Activated T-helper 1 cell treated with anti-CD3 and anti-CD28 coated beads, Interleukin-12 subunit alpha, Interleukin-12 subunit beta, Interleukin-2, Interleukin-4 antibody, amounts not matched to agents 30 ng/mL and 10 ng/mL and 1 ng/mL, durations not matched to agents 14 hours and 24 hours and 36 hours (primary cell): ENCODE measurements at regions of chr2 and their contacts with region 1.

Region 1: DNA sequence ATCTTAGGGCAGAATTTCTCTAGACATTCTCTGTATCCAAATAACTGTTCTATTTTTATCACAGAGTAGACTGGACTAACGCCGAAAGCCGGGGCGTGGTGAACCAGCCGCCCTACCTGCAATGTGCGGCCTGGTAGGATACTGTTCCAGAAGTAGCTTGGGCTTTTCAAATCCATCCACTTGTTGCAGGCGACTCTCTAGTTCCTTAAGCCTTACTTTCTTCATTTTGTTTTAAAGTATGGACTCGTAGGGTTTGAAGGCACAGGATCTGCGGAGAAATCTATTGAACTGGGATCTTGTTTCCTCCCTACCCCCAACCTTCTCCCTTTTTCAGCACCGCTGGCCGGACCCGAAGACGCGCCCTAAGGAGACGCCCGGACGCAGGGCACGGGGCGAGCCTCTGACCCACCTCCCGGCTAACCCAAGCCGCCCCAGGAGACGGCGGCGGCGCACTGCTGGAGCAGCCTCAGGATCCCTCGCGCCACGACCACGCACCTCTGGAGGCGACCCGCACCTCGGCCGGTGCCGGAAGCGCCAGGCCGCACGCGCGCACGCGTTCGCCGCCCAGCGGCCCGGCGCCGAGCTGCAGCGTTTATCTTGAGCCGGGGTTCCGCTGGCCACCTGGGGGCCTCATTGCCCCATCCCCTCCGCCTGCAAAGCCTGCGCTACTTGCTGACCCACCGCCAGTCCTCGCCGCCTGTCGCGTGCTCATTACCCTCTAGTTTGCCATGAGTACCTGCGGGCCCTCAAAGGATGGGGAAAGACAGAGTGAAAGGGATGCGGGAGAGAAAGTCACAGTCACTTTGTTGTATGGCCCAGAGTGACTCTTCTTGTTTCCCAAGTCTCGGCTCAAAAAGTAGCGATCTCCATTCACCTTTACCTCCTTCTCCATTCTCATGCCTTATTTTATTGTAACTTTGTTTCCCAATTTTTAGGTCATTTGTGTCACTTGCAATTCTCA is at the start of gene METTL5:
- DNase-seq: peak; percentile 79
- H3K4me3 Mint-ChIP-seq: peak within 1 kb of the TSS; percentile 93
- H3K27ac Mint-ChIP-seq: peak within 1 kb of the TSS; percentile 89
- H3K4me1 Mint-ChIP-seq: peaks cover 50% of the 10 kb centered on the region
- H3K27me3 Mint-ChIP-seq: no peaks in the 10 kb centered on the region
- total RNA-seq, gene METTL5: 92.0 and 92.1 TPM in 2 replicates

Region 2: DNA sequence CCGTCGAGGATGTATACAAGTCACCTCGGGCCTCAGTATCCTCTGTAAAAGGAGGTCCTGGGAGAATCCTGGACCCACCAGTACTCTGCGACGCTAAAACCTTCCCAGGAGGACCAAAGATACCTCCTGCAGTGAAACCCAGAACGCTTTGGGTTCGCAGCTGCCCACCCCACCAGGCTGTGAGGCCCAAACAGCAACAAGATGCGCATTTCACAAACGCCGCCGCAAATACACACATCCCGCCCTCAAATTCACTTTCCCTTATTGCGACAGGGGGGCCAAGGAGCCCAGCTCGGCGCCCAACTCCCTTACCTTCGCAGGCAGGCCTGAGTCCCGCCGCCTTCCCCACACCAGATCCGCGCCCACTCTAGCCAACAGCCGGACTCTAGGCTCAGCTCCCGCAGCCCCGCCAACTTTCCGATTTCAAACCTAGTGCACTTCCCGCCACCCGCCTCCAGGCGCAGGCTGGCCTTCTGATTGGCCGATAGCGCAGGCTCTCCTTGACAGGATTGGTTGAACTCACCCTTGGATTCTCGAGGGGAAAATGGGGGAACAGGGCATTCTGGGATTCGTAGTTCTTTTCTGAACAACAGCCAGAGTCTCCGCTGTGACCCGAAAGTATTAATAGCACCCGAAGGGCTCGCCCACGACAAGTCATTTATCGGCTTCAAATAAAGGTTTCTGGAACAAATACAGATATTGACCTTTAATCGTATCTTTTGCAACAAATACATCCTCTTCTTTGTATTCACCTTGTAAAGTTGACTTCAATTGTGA is 934.5 kb before region 1 on chr2 and contains the start of gene SPC25:
- intact Hi-C with region 1: loop called (anchors 10 kb)
- DNase-seq: peak; percentile 87
- H3K4me3 Mint-ChIP-seq: peak within 1 kb of the TSS; percentile 98
- H3K27ac Mint-ChIP-seq: peak within 1 kb of the TSS; percentile 92
- H3K4me1 Mint-ChIP-seq: peaks cover 32% of the 10 kb centered on the region
- H3K27me3 Mint-ChIP-seq: peaks cover 21% of the 10 kb centered on the region
- total RNA-seq, gene SPC25: 17.9 and 19.9 TPM in 2 replicates

Region 3: DNA sequence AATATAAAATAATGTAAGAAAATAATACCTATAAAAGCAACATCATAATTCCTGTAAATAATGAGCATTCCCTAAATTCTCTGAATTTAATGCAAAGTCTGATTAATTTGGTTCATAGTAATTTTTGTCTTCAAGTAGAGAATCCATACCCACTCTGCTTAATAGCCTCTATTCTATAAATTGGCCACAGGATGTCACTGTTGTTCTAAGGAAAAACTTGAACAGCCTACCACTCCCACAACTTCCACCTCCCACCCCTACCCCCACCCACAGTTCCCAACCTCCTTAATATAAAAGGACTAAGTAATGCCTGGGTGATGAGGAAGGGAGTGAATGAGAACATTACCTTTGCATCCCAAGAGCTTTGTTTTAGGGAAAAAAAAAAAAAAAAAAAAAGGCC is 372.6 kb before region 1 on chr2:
- intact Hi-C with region 1: loop called (anchors 2 kb)
- DNase-seq: no peak
- H3K4me3 Mint-ChIP-seq: no peak overlapping the region
- H3K27ac Mint-ChIP-seq: no peak overlapping the region
- H3K4me1 Mint-ChIP-seq: no peaks in the 10 kb centered on the region
- H3K27me3 Mint-ChIP-seq: peaks cover under 1% of the 10 kb centered on the region

Region 4: DNA sequence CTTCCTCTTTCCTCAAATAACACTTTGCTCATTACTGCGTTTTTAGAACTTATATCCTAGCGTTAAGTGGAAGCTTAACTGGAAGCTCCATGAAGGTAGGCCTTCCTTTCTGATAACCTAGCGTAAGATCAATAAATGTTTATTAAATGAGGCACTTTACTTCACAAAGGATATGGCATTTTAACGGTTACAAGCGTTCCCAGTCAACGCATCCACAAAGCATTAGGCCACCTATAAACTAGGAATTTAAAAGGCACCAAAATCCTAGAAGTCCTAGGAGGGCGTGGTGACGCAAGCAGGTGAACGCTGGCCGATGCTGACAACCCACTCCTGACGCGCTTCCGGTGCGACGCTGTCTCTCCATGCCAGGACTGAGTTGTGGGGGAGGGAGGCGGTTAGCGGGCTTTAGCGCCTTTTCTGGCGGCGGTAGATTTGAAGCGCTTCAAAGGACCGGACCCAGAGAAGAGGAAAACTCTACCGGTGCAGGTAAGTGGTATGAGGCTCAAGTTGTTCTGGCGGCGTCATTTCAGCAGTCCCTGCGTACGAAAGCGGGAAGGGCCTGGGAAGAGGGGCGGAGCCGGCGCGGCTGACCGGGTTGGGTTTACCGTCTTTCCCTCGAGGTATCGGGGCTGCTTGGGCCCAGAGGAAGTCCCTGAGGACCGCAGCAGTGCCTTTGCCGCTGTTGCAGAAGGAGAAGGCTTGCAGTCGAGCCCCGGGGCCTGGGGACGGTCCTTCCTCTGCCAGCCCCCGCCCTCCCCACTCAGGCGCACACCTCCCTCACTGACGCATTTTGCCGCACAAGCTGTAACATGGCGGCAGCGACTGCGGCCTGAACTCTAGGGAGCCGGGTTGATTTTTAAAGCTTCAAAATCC is 240.4 kb before region 1 on chr2 and contains the start of gene PPIG:
- intact Hi-C with region 1: loop called (anchors 1 kb)
- DNase-seq: peak; percentile 78
- H3K4me3 Mint-ChIP-seq: peak within 1 kb of the TSS; percentile 100
- H3K27ac Mint-ChIP-seq: peak within 1 kb of the TSS; percentile 100
- H3K4me1 Mint-ChIP-seq: peaks cover 21% of the 10 kb centered on the region
- H3K27me3 Mint-ChIP-seq: peaks cover 2% of the 10 kb centered on the region
- total RNA-seq, gene PPIG: 54.2 and 56.3 TPM in 2 replicates

Region 5: DNA sequence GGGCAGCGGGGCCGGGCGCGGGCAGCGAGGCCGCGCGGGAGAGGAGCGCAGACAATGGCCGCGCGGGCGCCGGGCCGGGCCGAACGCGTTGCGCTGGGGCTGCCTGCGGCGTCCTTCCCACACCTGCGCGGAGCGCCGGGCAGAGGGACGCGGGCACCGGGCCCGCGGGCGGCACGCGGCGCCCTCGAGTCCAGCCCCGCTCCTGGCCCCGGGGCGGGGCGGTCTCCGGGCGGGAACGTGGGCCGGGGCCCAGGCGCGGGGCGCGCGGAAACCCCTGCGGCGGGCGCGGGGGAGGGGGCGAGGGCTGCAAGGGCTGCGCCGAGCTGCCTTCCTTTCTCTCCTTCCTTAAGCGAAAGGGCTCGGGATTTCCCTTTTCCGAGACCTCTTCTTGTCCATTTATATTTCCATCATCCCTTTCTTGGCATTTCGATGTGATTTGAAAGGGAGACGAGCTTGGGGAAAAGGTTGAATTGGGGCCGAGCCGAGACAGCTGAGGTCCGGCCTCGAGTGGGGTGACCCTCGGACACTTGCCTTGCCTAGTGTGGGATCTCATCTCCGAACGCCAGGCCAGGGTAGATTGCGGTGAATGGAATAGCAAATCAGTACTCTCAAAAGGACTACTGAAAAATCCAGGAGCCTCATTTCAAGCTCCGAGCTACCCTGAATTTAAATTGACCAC is 90.3 kb before region 1 on chr2:
- intact Hi-C with region 1: loop called (anchors 5 kb)
- DNase-seq: no peak
- H3K4me3 Mint-ChIP-seq: peak overlapping the region; percentile 85
- H3K27ac Mint-ChIP-seq: peak overlapping the region; percentile 40
- H3K4me1 Mint-ChIP-seq: peaks cover 31% of the 10 kb centered on the region
- H3K27me3 Mint-ChIP-seq: peaks cover 39% of the 10 kb centered on the region

Region 6: GRCh38 chr2:169877398-169877797 is 52.7 kb after region 1 on chr2:
- intact Hi-C with region 1: loop called (anchors 1 kb)
- DNase-seq: no peak
- H3K4me3 Mint-ChIP-seq: no peak overlapping the region
- H3K27ac Mint-ChIP-seq: no peak overlapping the region
- H3K4me1 Mint-ChIP-seq: no peaks in the 10 kb centered on the region
- H3K27me3 Mint-ChIP-seq: no peaks in the 10 kb centered on the region